Activated CD4-positive, alpha-beta T cell treated with anti-CD3 and anti-CD28 coated beads, Interleukin-2, amount 10 ng/mL, durations not matched to agents 7 days and 5 days (primary cell): ENCODE measurements at regions of chr2 and their contacts with region 1.

Region 1: GRCh38 chr2:162018530-162018929 is 55.5 kb downstream of the DPP4 start:
- DNase-seq: no peak
- H3K4me3 Mint-ChIP-seq: no peak overlapping the region
- H3K27ac Mint-ChIP-seq: peak overlapping the region; percentile 38
- H3K4me1 Mint-ChIP-seq: peaks cover 69% of the 10 kb centered on the region
- H3K27me3 Mint-ChIP-seq: no peaks in the 10 kb centered on the region

Region 2: GRCh38 chr2:162029287-162029901 is 10.9 kb after region 1 on chr2:
- CTCF ChIA-PET with region 1: interaction called, 14 read pairs
- POLR2A ChIA-PET with region 1: no interaction called
- DNase-seq: no peak
- H3K4me3 Mint-ChIP-seq: no peak overlapping the region
- H3K27ac Mint-ChIP-seq: no peak overlapping the region
- H3K4me1 Mint-ChIP-seq: peaks cover 43% of the 10 kb centered on the region
- H3K27me3 Mint-ChIP-seq: no peaks in the 10 kb centered on the region